Lower leg skin (tissue), 4 donors: ENCODE measurements at regions of chr5 and their contacts with region 1.

Region 1: GRCh38 chr5:39074016-39074886 is at the start of gene RICTOR:
- DNase-seq: peak; percentile 81 to 97
- H3K4me3 ChIP-seq: peak within 1 kb of the TSS; percentile 99
- CTCF ChIP-seq: no peak
- POLR2A ChIP-seq: no peak
- total RNA-seq, gene RICTOR: 21.7 to 46.7 (median 33.4) TPM

Region 2: GRCh38 chr5:38994324-38994927 is 79.8 kb before region 1 on chr5:
- intact Hi-C with region 1: loop called (anchors 10 kb)
- DNase-seq: no peak
- H3K4me3 ChIP-seq: no peak overlapping the region
- CTCF ChIP-seq: no peak
- POLR2A ChIP-seq: no peak

Region 3: GRCh38 chr5:39049315-39049714 is 24.9 kb before region 1 on chr5:
- intact Hi-C with region 1: no loop called
- DNase-seq: no peak
- H3K4me3 ChIP-seq: no peak overlapping the region
- CTCF ChIP-seq: no peak
- POLR2A ChIP-seq: no peak

Region 4: DNA sequence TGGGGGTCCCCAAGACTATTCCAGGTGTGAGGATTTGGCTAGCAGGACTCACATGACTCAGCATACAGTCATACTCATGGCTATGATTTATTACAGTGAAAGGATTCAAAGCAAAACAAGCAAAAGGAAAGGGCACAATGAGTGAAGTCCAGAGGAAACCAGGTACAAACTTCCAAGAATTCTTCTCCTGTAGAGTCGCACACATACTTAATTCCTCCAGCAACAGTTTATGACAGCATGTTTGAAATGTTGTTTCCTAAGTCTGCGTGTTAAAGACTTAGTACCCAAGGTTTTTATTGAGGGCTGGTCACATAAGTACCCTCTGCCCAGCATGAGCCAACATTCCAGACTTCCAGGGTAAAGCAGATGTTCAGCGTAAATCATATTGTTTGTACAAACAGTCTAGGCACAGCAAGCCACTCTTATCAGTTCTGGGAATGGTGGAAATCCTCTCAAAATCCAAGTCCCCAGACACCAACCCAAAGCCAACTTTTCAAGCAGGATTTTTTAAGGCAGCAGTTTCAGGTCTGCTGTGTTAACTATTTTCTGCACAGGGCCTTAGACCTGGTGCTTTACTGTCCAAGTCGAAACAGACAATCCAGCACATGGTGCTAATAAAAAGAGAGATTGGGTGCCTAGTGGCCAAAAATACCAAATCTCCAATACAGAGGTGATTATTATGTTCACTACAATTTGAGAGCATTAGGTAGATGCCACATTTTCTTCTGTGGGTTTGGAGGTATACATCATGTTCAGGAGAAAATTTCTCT is 18.5 kb after region 1 on chr5:
- intact Hi-C with region 1: no loop called
- DNase-seq: no peak
- H3K4me3 ChIP-seq: no peak overlapping the region
- CTCF ChIP-seq: no peak
- POLR2A ChIP-seq: no peak